CD8-positive, alpha-beta T cell (primary cell): ENCODE measurements at regions of chr17 and their contacts with region 1.

Region 1: GRCh38 chr17:77542551-77543490 is 402.1 kb downstream of the SEC14L1 start:
- DNase-seq: peak; percentile 32 to 78 (median 63)
- ATAC-seq: peak; percentile 83
- H3K4me3 ChIP-seq: no peak overlapping the region
- H3K4me3 Mint-ChIP-seq: no peak overlapping the region
- H3K27ac ChIP-seq: no peak overlapping the region
- H3K27ac Mint-ChIP-seq: no peak overlapping the region
- H3K4me1 ChIP-seq: no peaks in the 10 kb centered on the region
- H3K4me1 Mint-ChIP-seq: no peaks in the 10 kb centered on the region
- H3K27me3 ChIP-seq: no peaks in the 10 kb centered on the region
- H3K27me3 Mint-ChIP-seq: peaks cover 3% of the 10 kb centered on the region
- CTCF ChIP-seq: peak; percentile 84

Region 2: DNA sequence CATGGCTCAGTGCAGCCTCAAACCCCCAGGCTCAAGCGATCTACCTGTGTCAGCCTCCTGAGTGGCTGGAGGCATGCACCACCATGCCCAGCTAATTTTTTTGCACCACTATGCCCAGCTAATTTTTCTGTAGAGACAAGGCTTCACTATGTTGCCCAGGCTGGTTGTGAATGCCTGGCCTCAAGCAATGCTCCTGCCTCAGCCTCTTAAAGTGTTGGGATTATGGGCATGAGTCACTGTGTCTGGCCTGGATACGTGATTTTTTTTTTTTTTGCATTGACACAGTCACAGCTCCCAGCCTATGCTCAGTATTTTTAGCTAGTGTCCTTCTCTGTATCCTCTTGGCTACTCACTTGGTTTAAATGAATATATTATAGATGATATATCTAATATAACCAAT is 38.7 kb after region 1 on chr17:
- CTCF ChIA-PET with region 1: no interaction called
- POLR2A ChIA-PET with region 1: no interaction called
- intact Hi-C with region 1: no loop called
- DNase-seq: no peak
- ATAC-seq: no peak
- H3K4me3 ChIP-seq: no peak overlapping the region
- H3K4me3 Mint-ChIP-seq: no peak overlapping the region
- H3K27ac ChIP-seq: no peak overlapping the region
- H3K27ac Mint-ChIP-seq: no peak overlapping the region
- H3K4me1 ChIP-seq: no peaks in the 10 kb centered on the region
- H3K4me1 Mint-ChIP-seq: peaks cover 5% of the 10 kb centered on the region
- H3K27me3 ChIP-seq: no peaks in the 10 kb centered on the region
- H3K27me3 Mint-ChIP-seq: no peaks in the 10 kb centered on the region
- CTCF ChIP-seq: no peak

Region 3: DNA sequence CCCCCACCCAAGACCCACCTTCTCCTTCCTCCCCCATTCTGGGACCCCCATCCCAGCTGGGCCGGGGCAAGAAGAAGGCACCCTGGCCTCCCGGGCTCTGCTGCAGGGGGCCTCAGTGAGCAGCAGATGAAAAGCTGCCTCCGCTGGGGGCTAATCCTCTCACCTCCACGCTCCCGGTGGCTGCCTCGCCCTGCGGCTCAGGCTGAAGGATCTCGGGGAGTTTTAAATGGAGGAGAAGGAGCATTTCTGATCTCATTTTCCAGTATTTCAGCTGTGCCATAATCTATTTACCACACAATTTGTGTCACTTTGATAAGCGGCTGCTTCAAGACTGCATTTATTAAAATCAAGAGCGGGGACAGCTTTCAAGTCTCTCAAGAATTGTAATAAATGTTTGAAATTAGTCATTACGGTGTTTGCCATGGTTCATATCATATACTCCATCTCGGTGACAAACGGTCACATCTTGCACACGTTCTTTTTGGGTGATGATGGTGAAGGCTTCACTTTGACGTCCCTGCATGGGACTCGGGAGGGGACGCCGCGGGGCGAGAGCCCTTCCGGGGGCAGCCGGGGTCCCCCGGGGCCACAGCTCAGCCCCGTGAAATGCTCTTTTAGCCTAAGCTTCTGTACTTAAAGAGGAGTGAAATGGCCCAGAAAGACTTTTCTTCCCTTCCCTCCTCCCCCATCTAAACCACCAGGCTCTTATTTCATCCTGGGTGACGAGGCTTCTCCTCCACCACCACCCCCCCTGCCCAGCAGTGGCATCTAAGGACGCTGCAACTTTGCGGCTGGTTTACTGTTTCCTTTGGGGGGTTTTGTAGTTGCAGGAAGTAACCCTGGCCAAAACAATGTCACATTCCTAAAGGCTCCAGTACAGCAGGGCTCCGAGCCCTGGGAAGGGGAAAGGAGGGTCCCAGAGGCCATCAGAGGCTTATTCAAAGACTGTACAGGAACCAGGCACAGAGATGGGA is 102.5 kb after region 1 on chr17:
- CTCF ChIA-PET with region 1: interaction called, 7 read pairs
- POLR2A ChIA-PET with region 1: interaction called, 5 read pairs
- intact Hi-C with region 1: loop called in 1 of 2 experiments (anchors 1 kb)
- DNase-seq: peak; percentile 26 to 84 (median 72)
- ATAC-seq: peak; percentile 86
- H3K4me3 ChIP-seq: peak overlapping the region; percentile 46 to 48
- H3K4me3 Mint-ChIP-seq: peak overlapping the region; percentile 82
- H3K27ac ChIP-seq: peak overlapping the region; percentile 24 to 33
- H3K27ac Mint-ChIP-seq: peak overlapping the region; percentile 92
- H3K4me1 ChIP-seq: peaks cover 22% of the 10 kb centered on the region
- H3K4me1 Mint-ChIP-seq: peaks cover 24% of the 10 kb centered on the region
- H3K27me3 ChIP-seq: no peaks in the 10 kb centered on the region
- H3K27me3 Mint-ChIP-seq: no peaks in the 10 kb centered on the region
- CTCF ChIP-seq: peak; percentile 54

Region 4: DNA sequence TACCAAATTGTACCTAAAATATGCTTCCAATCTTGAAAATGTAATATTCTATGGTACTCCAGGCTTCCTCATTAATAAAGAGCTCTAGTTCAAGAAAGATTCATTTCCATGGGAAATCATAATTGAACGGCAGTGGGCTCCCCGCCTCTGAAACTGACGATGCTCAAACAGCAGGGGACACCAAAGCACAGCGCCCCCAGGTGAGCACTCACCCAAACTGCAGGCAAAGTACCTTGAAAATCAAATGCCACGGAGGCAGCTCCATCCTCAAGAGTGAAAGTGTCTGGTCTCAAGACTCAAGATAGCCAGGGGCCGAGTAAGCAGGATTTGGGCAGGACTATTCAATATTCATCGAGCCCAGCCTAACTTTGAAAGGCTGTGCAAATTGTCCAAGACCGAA is 198.3 kb after region 1 on chr17:
- CTCF ChIA-PET with region 1: interaction called, 6 read pairs
- POLR2A ChIA-PET with region 1: no interaction called
- intact Hi-C with region 1: loop called in 1 of 2 experiments (anchors 5 kb)
- DNase-seq: peak; percentile 8 to 62 (median 40)
- ATAC-seq: no peak
- H3K4me3 ChIP-seq: no peak overlapping the region
- H3K4me3 Mint-ChIP-seq: no peak overlapping the region
- H3K27ac ChIP-seq: no peak overlapping the region
- H3K27ac Mint-ChIP-seq: no peak overlapping the region
- H3K4me1 ChIP-seq: no peaks in the 10 kb centered on the region
- H3K4me1 Mint-ChIP-seq: no peaks in the 10 kb centered on the region
- H3K27me3 ChIP-seq: no peaks in the 10 kb centered on the region
- H3K27me3 Mint-ChIP-seq: no peaks in the 10 kb centered on the region
- CTCF ChIP-seq: peak; percentile 59

Region 5: DNA sequence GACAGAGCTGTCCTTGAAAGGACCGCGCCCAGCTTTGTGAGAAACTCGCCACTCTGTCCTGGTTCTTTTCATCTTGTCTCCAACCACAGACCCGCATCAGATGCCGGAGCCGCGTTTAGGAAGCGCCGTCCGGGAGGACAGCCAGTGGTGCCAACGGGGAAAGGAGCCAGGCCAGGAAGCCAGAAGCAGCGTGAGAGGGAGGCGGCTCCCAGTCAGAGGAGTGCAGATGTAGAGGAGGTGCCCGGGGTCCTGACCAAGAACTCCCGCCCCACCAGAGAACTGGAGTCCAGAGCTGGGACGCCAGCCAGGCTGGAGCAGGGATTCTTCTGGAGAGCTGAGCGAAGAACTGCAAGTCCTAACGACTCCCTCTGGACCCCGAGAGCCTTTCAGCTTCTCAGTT is 366.4 kb after region 1 on chr17:
- CTCF ChIA-PET with region 1: no interaction called
- POLR2A ChIA-PET with region 1: no interaction called
- intact Hi-C with region 1: loop called in 1 of 2 experiments (anchors 10 kb)
- DNase-seq: no peak
- ATAC-seq: no peak
- H3K4me3 ChIP-seq: no peak overlapping the region
- H3K4me3 Mint-ChIP-seq: no peak overlapping the region
- H3K27ac ChIP-seq: no peak overlapping the region
- H3K27ac Mint-ChIP-seq: no peak overlapping the region
- H3K4me1 ChIP-seq: no peaks in the 10 kb centered on the region
- H3K4me1 Mint-ChIP-seq: no peaks in the 10 kb centered on the region
- H3K27me3 ChIP-seq: peaks cover 0 to under 1% of the 10 kb centered on the region in 2 experiments
- H3K27me3 Mint-ChIP-seq: peaks cover 1% of the 10 kb centered on the region
- CTCF ChIP-seq: no peak